SK-N-SH (cell line): ENCODE measurements at regions of chr17 and their contacts with region 1.

Region 1: DNA sequence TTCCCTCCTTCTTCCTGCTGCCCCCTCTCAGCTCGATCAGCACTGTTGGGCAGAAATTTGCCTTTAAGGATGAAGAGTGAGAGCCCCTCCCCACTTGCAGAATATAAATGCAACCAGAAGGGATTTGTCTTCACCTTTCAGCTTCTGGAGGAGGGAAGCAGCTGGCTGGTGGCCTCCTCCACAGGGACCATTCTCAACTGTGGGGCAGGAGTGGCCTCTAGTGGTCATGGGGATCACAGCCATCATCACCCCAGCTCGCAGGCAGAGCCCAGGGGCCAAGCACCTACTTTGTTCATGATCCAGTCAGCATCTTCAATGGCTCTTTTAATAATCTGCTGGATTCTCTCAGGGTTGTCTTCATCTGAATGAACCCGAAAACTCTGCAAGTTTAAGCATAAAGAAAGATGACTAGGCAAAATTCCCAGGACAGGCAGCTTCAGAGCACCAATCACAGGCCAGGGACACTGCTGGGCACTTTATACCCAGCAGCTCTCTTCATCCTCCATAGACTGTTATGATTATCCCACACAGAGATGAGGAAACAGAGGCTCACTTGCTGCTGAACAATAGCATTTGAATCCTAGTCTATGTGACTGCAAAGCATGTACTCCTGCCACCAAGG is 13.1 kb downstream of the LYRM9 start:
- DNase-seq: peak; percentile 88
- H3K4me3 ChIP-seq: no peak overlapping the region; a peak in 1 of 4 replicates
- H3K27ac ChIP-seq: no peak overlapping the region
- H3K4me1 ChIP-seq: peaks cover 0 to 3% of the 10 kb centered on the region in 2 experiments; a peak in 1 of 4 replicates
- H3K27me3 ChIP-seq: no peaks in the 10 kb centered on the region
- CTCF ChIP-seq: peak; percentile 89
- EP300 ChIP-seq: no peak
- RAD21 ChIP-seq: peak; percentile 95

Region 2: GRCh38 chr17:27609611-27610303 is 270.3 kb before region 1 on chr17:
- CTCF ChIA-PET with region 1: interaction called, 18 read pairs
- POLR2A ChIA-PET with region 1: no interaction called
- DNase-seq: peak; percentile 61
- H3K4me3 ChIP-seq: no peak overlapping the region
- H3K27ac ChIP-seq: no peak overlapping the region
- H3K4me1 ChIP-seq: no peaks in the 10 kb centered on the region; a peak in 1 of 4 replicates
- H3K27me3 ChIP-seq: no peaks in the 10 kb centered on the region
- CTCF ChIP-seq: peak; percentile 49
- EP300 ChIP-seq: no peak
- RAD21 ChIP-seq: peak; percentile 63

Region 3: DNA sequence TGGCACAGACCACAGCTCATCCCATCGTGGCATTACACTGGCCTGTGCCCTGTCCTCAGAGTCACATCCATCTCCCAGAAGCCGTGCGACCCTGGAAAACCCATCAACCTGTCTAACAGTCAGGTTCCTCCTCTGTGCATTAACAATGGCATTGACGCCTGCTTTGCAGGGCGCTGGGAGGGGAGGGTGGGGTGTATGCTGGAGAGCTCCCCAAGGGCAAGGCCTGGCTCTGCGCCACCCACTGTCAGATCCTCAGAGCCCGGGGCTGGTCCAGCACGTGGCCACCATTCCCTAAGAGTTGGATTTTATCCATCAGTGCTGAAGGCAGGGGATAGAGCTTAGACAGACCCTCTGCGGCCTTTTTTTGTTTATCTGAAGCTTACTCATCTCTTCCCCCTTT is 108.5 kb before region 1 on chr17:
- CTCF ChIA-PET with region 1: interaction called, 17 read pairs
- POLR2A ChIA-PET with region 1: no interaction called
- DNase-seq: no peak
- H3K4me3 ChIP-seq: no peak overlapping the region
- H3K27ac ChIP-seq: no peak overlapping the region
- H3K4me1 ChIP-seq: no peaks in the 10 kb centered on the region; a peak in 1 of 4 replicates
- H3K27me3 ChIP-seq: no peaks in the 10 kb centered on the region
- CTCF ChIP-seq: no peak
- EP300 ChIP-seq: no peak
- RAD21 ChIP-seq: no peak

Region 4: DNA sequence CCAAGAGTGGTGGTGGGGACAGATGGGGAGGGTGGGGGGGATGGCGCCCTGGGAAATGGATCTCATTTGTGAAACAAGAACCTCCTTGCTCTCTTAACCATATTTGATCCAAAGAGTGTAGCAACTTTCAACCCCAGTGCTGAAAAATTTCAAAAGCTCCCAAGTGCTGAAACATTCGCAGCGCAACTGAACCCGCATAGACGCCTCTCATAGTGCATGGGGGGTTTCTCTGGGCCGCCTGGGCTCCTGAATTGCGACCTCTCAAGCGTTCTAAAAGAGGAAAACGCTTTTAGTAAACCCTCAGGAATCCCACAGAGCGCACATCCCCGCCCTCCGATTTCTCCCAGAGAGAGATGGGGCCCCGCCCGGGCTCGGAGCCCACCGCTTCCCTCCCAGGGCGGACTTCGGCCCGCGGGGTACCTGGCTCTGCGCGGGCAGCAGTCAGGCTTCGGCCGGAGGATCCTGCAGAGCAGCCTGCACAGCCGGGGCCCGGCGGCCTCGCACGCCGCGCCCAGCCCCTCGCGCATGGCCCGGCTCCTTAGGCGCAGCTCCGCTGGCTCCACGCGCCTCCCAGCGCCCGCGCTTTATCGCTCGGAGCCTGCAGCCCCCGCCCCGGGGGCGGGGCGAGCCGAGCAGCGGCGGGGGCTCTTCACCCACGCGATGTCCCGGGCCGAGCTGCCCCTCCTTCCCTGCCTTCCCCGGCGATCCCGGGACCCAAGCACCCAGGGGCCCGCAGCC is 86.8 kb before region 1 on chr17:
- CTCF ChIA-PET with region 1: interaction called, 18 read pairs
- POLR2A ChIA-PET with region 1: no interaction called
- DNase-seq: peak; percentile 90
- H3K4me3 ChIP-seq: peak overlapping the region; percentile 37 to 43
- H3K27ac ChIP-seq: no peak overlapping the region
- H3K4me1 ChIP-seq: peaks cover 0 to 3% of the 10 kb centered on the region in 2 experiments; a peak in 1 of 4 replicates
- H3K27me3 ChIP-seq: peaks cover 7% of the 10 kb centered on the region
- CTCF ChIP-seq: no peak
- EP300 ChIP-seq: no peak
- RAD21 ChIP-seq: no peak

Region 5: GRCh38 chr17:27834571-27834970 is 45.5 kb before region 1 on chr17:
- CTCF ChIA-PET with region 1: interaction called, 15 read pairs
- POLR2A ChIA-PET with region 1: no interaction called
- DNase-seq: no peak
- H3K4me3 ChIP-seq: no peak overlapping the region
- H3K27ac ChIP-seq: no peak overlapping the region
- H3K4me1 ChIP-seq: no peaks in the 10 kb centered on the region
- H3K27me3 ChIP-seq: no peaks in the 10 kb centered on the region
- CTCF ChIP-seq: no peak
- EP300 ChIP-seq: no peak
- RAD21 ChIP-seq: no peak

Region 6: DNA sequence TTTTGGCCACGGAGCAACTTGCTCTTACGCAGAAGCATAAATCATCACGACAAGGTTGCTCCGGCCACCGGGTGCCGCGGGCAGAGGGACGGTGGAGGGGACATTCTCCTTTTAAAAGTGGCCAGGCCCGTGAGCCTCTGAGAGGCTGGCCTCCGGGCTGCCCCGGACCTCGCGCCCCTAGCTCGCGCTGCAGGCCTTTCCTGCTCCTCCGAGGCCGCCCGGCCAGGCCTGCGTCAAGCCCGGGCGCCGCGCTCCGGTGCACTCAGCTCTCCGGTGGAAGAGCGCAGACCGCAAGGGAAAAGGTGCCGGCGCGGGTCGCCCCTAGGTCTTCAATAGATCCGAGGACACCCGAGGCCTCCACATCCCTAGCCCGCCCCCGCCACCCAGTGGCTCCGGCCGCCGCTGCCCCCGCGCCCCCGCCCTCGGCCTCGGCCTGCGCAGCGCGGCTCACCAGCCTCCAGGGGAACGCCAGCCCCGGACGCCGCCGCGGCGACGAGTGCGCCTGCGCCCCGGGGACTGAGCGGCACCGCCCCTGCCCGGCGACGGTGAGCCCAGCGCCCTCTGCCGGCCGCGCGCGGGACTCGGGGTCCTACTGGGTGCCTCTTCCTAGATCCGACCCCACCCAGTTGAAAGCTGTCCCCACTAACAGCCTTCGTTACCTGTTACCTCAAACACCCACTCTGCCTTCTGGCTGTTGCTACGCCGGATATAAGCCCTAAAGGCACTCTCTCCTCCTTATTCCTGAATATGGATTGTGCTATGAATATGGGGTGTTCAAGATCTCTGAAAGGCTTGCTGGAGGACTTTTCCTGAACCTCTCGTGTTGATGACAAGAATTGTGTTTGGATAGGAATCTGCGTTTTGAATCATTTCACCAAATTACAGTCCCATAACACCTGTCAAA is 13.0 kb after region 1 on chr17 and contains the start of gene LYRM9:
- CTCF ChIA-PET with region 1: interaction called, 89 read pairs
- POLR2A ChIA-PET with region 1: no interaction called
- DNase-seq: peak; percentile 98
- H3K4me3 ChIP-seq: peak within 1 kb of the TSS; percentile 63 to 70
- H3K27ac ChIP-seq: peak within 1 kb of the TSS; percentile 41 to 77; a peak in 2 of 4 replicates
- H3K4me1 ChIP-seq: peaks cover 0 to 5% of the 10 kb centered on the region in 2 experiments; a peak in 2 of 4 replicates
- H3K27me3 ChIP-seq: no peaks in the 10 kb centered on the region
- CTCF ChIP-seq: peak; percentile 91
- EP300 ChIP-seq: no peak
- RAD21 ChIP-seq: peak; percentile 44
- polyA plus RNA-seq, gene LYRM9: 4.6 and 5.7 TPM in 2 replicates